ENCODE measurements at regions of chr6 and their contacts with region 1.

Region 1: DNA sequence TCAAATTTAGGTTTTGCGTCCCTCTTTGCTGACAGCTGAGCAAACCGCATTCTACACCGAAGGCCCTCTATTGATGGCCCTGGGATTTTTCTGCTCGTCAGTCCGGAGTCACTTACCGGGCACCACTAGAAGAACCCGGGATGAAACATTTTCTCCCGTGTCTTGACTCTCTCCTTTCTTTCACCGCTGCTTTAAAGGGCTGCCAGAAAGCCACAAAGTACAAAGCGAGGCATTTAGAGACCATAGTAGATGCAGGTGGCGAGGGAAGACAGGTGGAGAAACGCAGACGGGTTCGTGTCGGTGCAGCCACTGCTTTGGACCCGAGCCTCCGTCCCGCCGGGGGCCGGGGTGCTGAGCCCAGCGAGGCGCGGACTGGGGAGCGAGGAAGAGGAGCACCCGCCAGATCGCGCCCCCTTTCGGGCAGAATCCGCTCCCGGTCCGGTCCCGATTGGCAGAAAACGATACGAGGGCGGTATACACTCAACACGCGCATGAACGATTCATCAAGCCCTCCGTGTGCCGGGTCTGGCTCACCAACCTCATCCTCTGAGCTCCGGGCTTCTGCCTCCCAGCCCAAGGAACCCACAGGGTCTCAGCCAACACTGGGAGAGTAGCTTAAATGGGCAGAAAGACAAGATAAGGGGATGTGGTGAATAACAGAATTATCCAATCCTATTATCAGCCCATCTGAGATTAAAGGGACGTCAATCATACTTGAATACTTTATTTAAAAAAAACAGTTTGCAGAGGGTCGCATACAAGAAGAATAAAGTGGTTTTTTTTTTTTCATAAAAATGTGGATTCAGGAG is 84.9 kb downstream of the TRIM27 start:
- DNase-seq: peak; percentile 40
- ATAC-seq: peak; percentile 88
- H3K4me3 ChIP-seq: peak overlapping the region; percentile 70
- H3K27ac ChIP-seq: no peak overlapping the region
- H3K4me1 ChIP-seq: no peaks in the 10 kb centered on the region
- H3K27me3 ChIP-seq: peaks cover 0 to 2% of the 10 kb centered on the region in 2 experiments; a peak in 1 of 4 replicates
- CTCF ChIP-seq: peak; percentile 63 to 67 (median 66)
- EP300 ChIP-seq: no peak
- POLR2A ChIP-seq: no peak
- RAD21 ChIP-seq: 0 out of 2 replicates have a peak, but pooled peaks have one; percentile 15

Region 2: GRCh38 chr6:28769626-28770402 is 69.0 kb before region 1 on chr6:
- CTCF ChIA-PET with region 1: interaction called, 3 read pairs
- POLR2A ChIA-PET with region 1: no interaction called
- RAD21 ChIA-PET with region 1: no interaction called
- SMC1A ChIA-PET with region 1: no interaction called
- in situ Hi-C with region 1: loop called (anchors 10 kb)
- intact Hi-C with region 1: no loop called
- DNase-seq: no peak
- ATAC-seq: no peak
- H3K4me3 ChIP-seq: no peak overlapping the region
- H3K27ac ChIP-seq: no peak overlapping the region
- H3K4me1 ChIP-seq: no peaks in the 10 kb centered on the region
- H3K27me3 ChIP-seq: peaks cover 0 to 8% of the 10 kb centered on the region in 2 experiments; a peak in 2 of 4 replicates
- CTCF ChIP-seq: no peak
- EP300 ChIP-seq: no peak
- POLR2A ChIP-seq: no peak
- RAD21 ChIP-seq: no peak

Region 3: DNA sequence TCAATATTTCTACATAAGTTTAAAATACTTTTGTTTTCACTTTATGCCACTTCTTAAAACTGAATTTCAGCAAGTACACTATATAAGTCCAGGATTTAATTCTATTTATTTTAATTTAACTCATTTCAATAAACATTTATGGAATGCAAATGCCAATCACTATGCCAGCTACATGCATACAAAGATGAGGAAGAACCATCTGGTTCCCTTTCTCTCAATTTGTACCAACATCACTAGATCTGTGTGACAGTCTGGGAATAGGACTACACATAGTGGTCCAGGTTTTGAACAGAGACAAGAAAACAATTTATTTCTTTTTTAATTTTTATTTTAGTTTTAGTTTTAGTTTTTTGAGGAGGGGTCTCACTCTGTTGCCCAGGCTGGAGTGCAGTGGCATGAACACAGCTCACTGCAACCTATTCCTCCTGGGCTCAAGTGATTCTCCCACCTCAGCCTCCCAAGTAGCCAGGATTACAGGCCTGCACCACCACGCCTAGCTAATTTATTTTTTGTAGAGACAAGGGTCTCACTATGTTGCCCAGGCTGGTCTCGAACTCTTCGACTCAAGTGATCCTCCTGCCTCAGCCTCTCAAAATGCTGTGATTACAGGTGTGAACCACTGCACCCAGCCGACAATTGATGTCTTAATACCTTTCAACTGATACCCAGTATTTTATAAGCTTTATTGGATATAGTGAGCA is 49.1 kb after region 1 on chr6:
- CTCF ChIA-PET with region 1: interaction called, 17 read pairs
- POLR2A ChIA-PET with region 1: no interaction called
- RAD21 ChIA-PET with region 1: no interaction called
- SMC1A ChIA-PET with region 1: no interaction called
- in situ Hi-C with region 1: no loop called
- intact Hi-C with region 1: no loop called
- DNase-seq: no peak
- ATAC-seq: no peak
- H3K4me3 ChIP-seq: no peak overlapping the region
- H3K27ac ChIP-seq: no peak overlapping the region
- H3K4me1 ChIP-seq: no peaks in the 10 kb centered on the region
- H3K27me3 ChIP-seq: no peaks in the 10 kb centered on the region
- CTCF ChIP-seq: no peak
- EP300 ChIP-seq: no peak
- POLR2A ChIP-seq: no peak
- RAD21 ChIP-seq: no peak

Region 4: GRCh38 chr6:28940858-28941680 is 102.2 kb after region 1 on chr6:
- CTCF ChIA-PET with region 1: interaction called, 16 read pairs
- POLR2A ChIA-PET with region 1: no interaction called
- RAD21 ChIA-PET with region 1: interaction called, 17 read pairs
- SMC1A ChIA-PET with region 1: interaction called, 12 read pairs
- in situ Hi-C with region 1: loop called (anchors 5 kb)
- intact Hi-C with region 1: loop called (anchors 1 kb)
- DNase-seq: peak; percentile 93
- ATAC-seq: peak; percentile 82
- H3K4me3 ChIP-seq: peak overlapping the region; percentile 77
- H3K27ac ChIP-seq: peak overlapping the region; percentile 82
- H3K4me1 ChIP-seq: no peaks in the 10 kb centered on the region; the same call in 1 of the 2 replicates
- H3K27me3 ChIP-seq: no peaks in the 10 kb centered on the region
- CTCF ChIP-seq: no peak; a peak in 1 of 6 replicates
- EP300 ChIP-seq: peak in 1 of 2 experiments; percentile 86; a peak in 1 of 4 replicates
- POLR2A ChIP-seq: no peak
- RAD21 ChIP-seq: no peak

Region 5: GRCh38 chr6:28981833-28982475 is 143.1 kb after region 1 on chr6:
- CTCF ChIA-PET with region 1: interaction called, 19 read pairs
- POLR2A ChIA-PET with region 1: no interaction called
- RAD21 ChIA-PET with region 1: interaction called, 9 read pairs
- SMC1A ChIA-PET with region 1: interaction called, 17 read pairs
- in situ Hi-C with region 1: no loop called
- intact Hi-C with region 1: loop called (anchors 10 kb)
- DNase-seq: peak; percentile 79
- ATAC-seq: peak; percentile 77
- H3K4me3 ChIP-seq: peak overlapping the region; percentile 100
- H3K27ac ChIP-seq: no peak overlapping the region
- H3K4me1 ChIP-seq: peaks cover 6% of the 10 kb centered on the region; the same call in 1 of the 2 replicates
- H3K27me3 ChIP-seq: no peaks in the 10 kb centered on the region
- CTCF ChIP-seq: no peak; a peak in 1 of 6 replicates
- EP300 ChIP-seq: peak in 1 of 2 experiments; percentile 80; a peak in 1 of 4 replicates
- POLR2A ChIP-seq: no peak
- RAD21 ChIP-seq: no peak

Region 6: DNA sequence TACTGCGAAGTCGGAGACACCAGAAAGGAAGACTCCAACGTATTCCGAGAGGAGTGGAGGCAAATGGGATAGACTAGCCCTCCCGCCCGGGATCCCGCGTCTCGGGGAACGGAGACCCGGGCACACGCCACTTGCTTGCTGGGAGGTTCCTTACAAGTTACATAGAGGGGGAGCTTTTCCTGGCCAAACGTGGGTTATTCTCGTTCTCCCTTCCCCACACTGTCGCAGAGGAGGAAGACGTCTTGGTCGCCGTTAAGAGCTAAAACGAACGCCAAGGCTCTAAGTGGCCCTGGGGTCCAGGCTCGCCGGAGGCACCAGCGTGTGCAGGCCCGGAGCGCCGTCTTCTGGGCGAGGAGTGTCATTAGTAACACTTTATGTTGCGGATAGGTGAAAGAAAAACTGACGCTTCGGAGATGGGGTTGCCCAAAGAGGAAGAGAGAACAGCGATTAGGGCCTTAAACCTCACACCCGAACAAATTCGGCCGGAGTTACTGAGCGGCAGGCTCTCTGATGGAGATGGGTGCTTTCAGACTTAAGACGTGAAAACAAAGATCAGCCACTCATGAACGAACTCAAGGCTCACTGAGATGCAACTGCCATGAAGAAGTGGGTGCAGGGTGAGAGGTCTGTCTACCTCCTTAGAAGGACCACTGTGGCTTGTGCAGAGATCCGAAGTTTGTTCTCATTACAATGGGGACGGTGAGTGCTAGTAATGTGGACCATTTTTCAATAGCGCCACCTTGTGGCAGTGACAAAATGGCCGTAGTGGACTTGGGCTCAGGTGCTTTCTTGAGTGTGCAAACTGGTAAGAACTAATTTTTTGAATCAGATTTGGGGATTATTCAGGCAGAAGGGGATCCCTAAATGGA is 178.0 kb after region 1 on chr6:
- CTCF ChIA-PET with region 1: interaction called, 89 read pairs
- POLR2A ChIA-PET with region 1: no interaction called
- RAD21 ChIA-PET with region 1: interaction called, 27 read pairs
- SMC1A ChIA-PET with region 1: interaction called, 27 read pairs
- in situ Hi-C with region 1: loop called (anchors 5 kb)
- intact Hi-C with region 1: loop called (anchors 1 kb)
- DNase-seq: peak; percentile 56
- ATAC-seq: peak; percentile 97
- H3K4me3 ChIP-seq: peak overlapping the region; percentile 53
- H3K27ac ChIP-seq: no peak overlapping the region
- H3K4me1 ChIP-seq: no peaks in the 10 kb centered on the region
- H3K27me3 ChIP-seq: no peaks in the 10 kb centered on the region; a peak in 2 of 4 replicates
- CTCF ChIP-seq: peak; percentile 76 to 89 (median 78)
- EP300 ChIP-seq: no peak
- POLR2A ChIP-seq: no peak
- RAD21 ChIP-seq: peak; percentile 75

Measured in GM12878 (cell line).